ENCODE measurements at regions of chr15 and their contacts with region 1.

Region 1: GRCh38 chr15:95326431-95327182 is 1003.9 kb upstream of the NR2F2 start:
- DNase-seq: peak; percentile 42
- H3K4me3 ChIP-seq: peak overlapping the region; percentile 65 to 67
- H3K27ac ChIP-seq: peak overlapping the region; percentile 93 to 96
- H3K4me1 ChIP-seq: peaks cover 3% of the 10 kb centered on the region
- H3K27me3 ChIP-seq: no peaks in the 10 kb centered on the region
- CTCF ChIP-seq: no peak
- POLR2A ChIP-seq: no peak

Region 2: GRCh38 chr15:95277266-95277665 is 49.3 kb before region 1 on chr15:
- intact Hi-C with region 1: loop called (anchors 10 kb)
- DNase-seq: no peak
- H3K4me3 ChIP-seq: no peak overlapping the region
- H3K27ac ChIP-seq: no peak overlapping the region
- H3K4me1 ChIP-seq: peaks cover 16% of the 10 kb centered on the region
- H3K27me3 ChIP-seq: no peaks in the 10 kb centered on the region
- CTCF ChIP-seq: no peak
- POLR2A ChIP-seq: no peak

Region 3: GRCh38 chr15:96330450-96331145 is 1004.0 kb after region 1 on chr15 and contains the start of gene NR2F2:
- intact Hi-C with region 1: loop called (anchors 5 kb)
- DNase-seq: peak; percentile 98
- H3K4me3 ChIP-seq: peak within 1 kb of the TSS; percentile 82 to 86
- H3K27ac ChIP-seq: peak within 1 kb of the TSS; percentile 95 to 97
- H3K4me1 ChIP-seq: peaks cover 4% of the 10 kb centered on the region
- H3K27me3 ChIP-seq: no peaks in the 10 kb centered on the region
- CTCF ChIP-seq: no peak
- POLR2A ChIP-seq: peak; percentile 53
- total RNA-seq, gene NR2F2: 31.2 to 38.2 TPM

Measured in testis (tissue), 5 donors.